Endothelial cell of umbilical vein (primary cell): ENCODE measurements at regions of chr22 and their contacts with region 1.

Region 1: GRCh38 chr22:28829358-28830181 is 29.2 kb upstream of the XBP1 start:
- DNase-seq: peak; percentile 72
- H3K4me3 ChIP-seq: no peak overlapping the region
- H3K27ac ChIP-seq: no peak overlapping the region
- H3K4me1 ChIP-seq: no peaks in the 10 kb centered on the region
- H3K27me3 ChIP-seq: no peaks in the 10 kb centered on the region
- CTCF ChIP-seq: peak; percentile 90 to 97
- POLR2A ChIP-seq: no peak

Region 2: DNA sequence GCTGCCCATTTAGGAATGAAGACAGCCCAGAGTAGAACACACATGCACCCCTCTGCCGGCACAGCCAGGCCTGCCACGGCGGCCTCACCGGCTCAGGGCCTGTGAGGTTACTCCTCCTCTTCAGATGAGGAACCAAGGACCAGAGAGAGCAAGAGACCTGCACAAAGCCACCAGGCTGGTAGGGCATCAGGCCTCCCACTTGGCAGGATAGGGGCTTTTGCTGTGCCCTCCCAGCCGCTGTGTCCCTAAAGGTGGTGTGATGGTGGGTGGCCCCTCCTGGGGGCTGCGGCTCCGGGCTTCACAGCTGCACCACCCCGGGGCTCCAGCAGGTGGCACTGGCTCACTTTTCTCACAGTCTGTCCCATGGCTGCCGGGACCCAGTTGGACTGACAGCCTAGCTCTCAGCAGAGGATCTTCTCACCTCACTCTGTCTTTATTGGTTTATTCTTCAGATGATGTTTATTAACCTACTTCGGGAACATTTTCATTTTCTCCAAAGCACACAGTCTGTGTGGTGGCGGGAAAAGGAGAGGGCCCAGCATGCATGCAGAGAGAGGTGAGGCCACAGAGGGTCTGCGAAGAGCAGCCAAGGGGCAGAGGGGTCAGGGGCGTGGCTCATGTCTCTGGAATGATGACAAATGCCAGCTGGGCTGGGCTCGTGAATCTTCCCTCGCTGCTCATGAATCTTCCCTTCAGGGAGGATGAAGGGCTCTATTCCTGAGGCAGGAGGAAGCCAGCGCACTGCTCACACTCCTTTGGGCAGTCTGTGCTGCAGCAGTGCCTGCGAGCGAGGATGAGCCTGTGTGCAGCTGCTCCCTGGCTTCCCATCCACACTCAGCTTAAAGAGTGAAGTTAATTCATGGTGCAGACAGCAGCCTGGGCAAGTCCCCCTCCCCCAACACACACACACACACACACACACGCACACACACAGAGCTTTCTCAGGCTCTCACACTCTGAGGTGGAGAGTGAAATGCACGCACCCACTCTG is 809.4 kb before region 1 on chr22:
- CTCF ChIA-PET with region 1: interaction called, 11 read pairs
- POLR2A ChIA-PET with region 1: no interaction called
- dilution Hi-C with region 1: no loop called
- intact Hi-C with region 1: loop called (anchors 1 kb)
- DNase-seq: peak; percentile 52
- H3K4me3 ChIP-seq: no peak overlapping the region
- H3K27ac ChIP-seq: no peak overlapping the region
- H3K4me1 ChIP-seq: peaks cover 9% of the 10 kb centered on the region
- H3K27me3 ChIP-seq: no peaks in the 10 kb centered on the region
- CTCF ChIP-seq: peak; percentile 95 to 98
- POLR2A ChIP-seq: no peak

Region 3: DNA sequence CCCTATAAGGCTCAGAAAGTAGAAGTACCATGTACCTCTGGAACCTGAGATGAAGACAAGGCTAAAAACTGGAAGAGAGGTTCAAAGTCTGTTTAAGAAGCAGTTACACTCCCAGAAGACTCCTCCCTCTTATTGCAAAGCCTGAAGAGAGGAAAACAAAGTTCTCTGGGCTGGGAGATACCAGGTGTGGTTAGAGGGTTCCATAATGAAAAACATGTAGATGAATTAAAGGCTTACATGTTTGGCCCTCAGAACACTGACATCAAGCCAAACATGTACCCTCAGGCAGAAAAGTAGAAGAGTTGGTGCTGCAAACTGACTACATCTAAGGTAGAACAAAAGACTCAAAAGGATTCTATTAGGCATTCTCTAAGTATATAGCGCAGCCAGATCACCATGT is 355.2 kb before region 1 on chr22:
- CTCF ChIA-PET with region 1: no interaction called
- POLR2A ChIA-PET with region 1: no interaction called
- dilution Hi-C with region 1: no loop called
- intact Hi-C with region 1: no loop called
- DNase-seq: no peak
- H3K4me3 ChIP-seq: no peak overlapping the region
- H3K27ac ChIP-seq: no peak overlapping the region
- H3K4me1 ChIP-seq: no peaks in the 10 kb centered on the region
- H3K27me3 ChIP-seq: no peaks in the 10 kb centered on the region
- CTCF ChIP-seq: no peak
- POLR2A ChIP-seq: no peak

Region 4: GRCh38 chr22:28772633-28773460 is 56.7 kb before region 1 on chr22 and contains the start of gene CCDC117:
- CTCF ChIA-PET with region 1: interaction called, 3 read pairs
- POLR2A ChIA-PET with region 1: interaction called, 3 read pairs
- dilution Hi-C with region 1: no loop called
- intact Hi-C with region 1: loop called (anchors 2 kb)
- DNase-seq: peak; percentile 94
- H3K4me3 ChIP-seq: peak within 1 kb of the TSS; percentile 31 to 85 (median 51)
- H3K27ac ChIP-seq: peak within 1 kb of the TSS; percentile 79
- H3K4me1 ChIP-seq: peaks cover 4% of the 10 kb centered on the region
- H3K27me3 ChIP-seq: no peaks in the 10 kb centered on the region
- CTCF ChIP-seq: peak; percentile 28 to 37
- POLR2A ChIP-seq: peak; percentile 93
- total RNA-seq, gene CCDC117: 22.8 and 23.3 TPM in 2 replicates

Region 5: GRCh38 chr22:28800308-28801077 is 29.1 kb before region 1 on chr22 and contains the start of gene XBP1:
- CTCF ChIA-PET with region 1: interaction called, 14 read pairs
- POLR2A ChIA-PET with region 1: interaction called, 5 read pairs
- dilution Hi-C with region 1: no loop called
- intact Hi-C with region 1: loop called (anchors 2 kb)
- DNase-seq: peak; percentile 95
- H3K4me3 ChIP-seq: peak within 1 kb of the TSS; percentile 84 to 100 (median 100)
- H3K27ac ChIP-seq: peak within 1 kb of the TSS; percentile 100
- H3K4me1 ChIP-seq: peaks cover 26% of the 10 kb centered on the region
- H3K27me3 ChIP-seq: no peaks in the 10 kb centered on the region
- CTCF ChIP-seq: no peak
- POLR2A ChIP-seq: peak; percentile 94
- total RNA-seq, gene XBP1: 90.4 and 103 TPM in 2 replicates

Region 6: GRCh38 chr22:28817919-28818909 is 11.4 kb before region 1 on chr22:
- CTCF ChIA-PET with region 1: interaction called, 29 read pairs
- POLR2A ChIA-PET with region 1: no interaction called
- dilution Hi-C with region 1: no loop called
- intact Hi-C with region 1: no loop called
- DNase-seq: no peak
- H3K4me3 ChIP-seq: no peak overlapping the region
- H3K27ac ChIP-seq: no peak overlapping the region
- H3K4me1 ChIP-seq: no peaks in the 10 kb centered on the region
- H3K27me3 ChIP-seq: no peaks in the 10 kb centered on the region
- CTCF ChIP-seq: no peak
- POLR2A ChIP-seq: no peak

Region 7: DNA sequence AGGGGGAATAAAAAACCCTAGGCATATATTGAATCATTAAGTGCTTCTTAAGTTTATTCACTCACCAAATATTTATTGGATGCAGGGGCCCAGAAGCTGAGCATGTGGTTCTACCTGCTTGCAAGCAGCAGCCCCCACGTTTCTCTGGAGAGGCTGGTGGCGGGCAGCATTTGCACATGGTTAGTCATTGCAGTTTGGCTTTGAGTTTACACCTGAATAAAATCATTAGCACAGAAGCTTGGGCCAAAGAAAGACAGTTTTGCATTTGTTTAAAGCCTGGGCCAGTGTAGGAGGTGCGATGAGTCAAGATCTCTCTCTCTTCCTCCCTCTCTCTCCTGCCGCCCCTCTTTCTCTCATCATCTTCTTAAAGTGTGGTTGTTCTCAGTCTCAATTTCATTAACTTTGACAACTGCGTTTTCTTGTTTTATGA is 159.5 kb after region 1 on chr22:
- CTCF ChIA-PET with region 1: no interaction called
- POLR2A ChIA-PET with region 1: no interaction called
- dilution Hi-C with region 1: no loop called
- intact Hi-C with region 1: no loop called
- DNase-seq: no peak
- H3K4me3 ChIP-seq: no peak overlapping the region
- H3K27ac ChIP-seq: no peak overlapping the region
- H3K4me1 ChIP-seq: no peaks in the 10 kb centered on the region
- H3K27me3 ChIP-seq: no peaks in the 10 kb centered on the region
- CTCF ChIP-seq: no peak
- POLR2A ChIP-seq: no peak

Region 8: DNA sequence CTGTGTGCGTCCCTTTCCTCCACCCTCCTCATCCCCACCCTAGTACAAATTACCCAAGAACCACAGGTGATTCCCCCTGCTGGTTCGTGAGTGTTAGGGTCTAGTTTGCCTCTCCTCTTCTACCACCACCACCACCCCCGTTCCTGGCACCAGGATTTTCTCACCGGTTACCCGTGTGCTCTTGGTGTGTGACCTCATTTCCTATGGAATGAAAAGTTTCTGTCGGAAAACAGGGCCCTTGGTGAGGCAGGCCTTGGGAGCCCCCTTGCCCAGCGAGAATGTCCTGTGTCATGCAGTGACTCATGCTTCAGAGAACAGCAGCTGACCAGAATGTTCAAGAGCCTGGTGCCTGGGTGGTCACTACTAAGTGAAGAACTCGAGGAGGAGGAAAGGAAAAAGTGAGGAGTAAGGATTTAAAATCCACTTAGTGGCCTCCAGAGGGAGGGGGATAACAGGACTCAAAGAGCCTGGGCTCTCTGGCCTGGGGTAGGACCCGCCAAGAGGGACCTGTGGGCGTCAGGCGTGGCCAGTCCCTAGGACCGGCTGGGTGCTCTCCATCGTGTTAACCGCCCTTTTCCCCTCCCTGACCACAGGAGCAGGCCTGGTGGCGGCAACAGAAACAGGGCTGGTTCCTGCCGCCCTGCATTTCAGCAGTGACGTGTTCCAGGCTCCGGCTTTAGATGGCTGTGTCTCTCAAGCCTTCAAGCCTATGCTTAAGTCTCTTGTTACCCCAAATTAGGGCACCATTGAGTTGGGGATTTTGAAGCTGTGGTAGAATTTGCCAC is 201.8 kb after region 1 on chr22:
- CTCF ChIA-PET with region 1: no interaction called
- POLR2A ChIA-PET with region 1: no interaction called
- dilution Hi-C with region 1: no loop called
- intact Hi-C with region 1: no loop called
- DNase-seq: peak; percentile 97
- H3K4me3 ChIP-seq: peak overlapping the region in 2 of 3 experiments; percentile 43 to 52
- H3K27ac ChIP-seq: peak overlapping the region; percentile 99
- H3K4me1 ChIP-seq: peaks cover 27% of the 10 kb centered on the region
- H3K27me3 ChIP-seq: no peaks in the 10 kb centered on the region
- CTCF ChIP-seq: peak in 1 of 2 donors; percentile 10
- POLR2A ChIP-seq: no peak